ENCODE measurements at regions of chr6 and their contacts with region 1.

Region 1: GRCh38 chr6:107731422-107732319 is 92.4 kb downstream of the SCML4 start:
- DNase-seq: peak; percentile 43 to 61 (median 46)
- H3K4me3 ChIP-seq: peak overlapping the region; percentile 71 to 88
- H3K4me3 Mint-ChIP-seq: peak overlapping the region; percentile 91 to 99 (median 96)
- H3K27ac ChIP-seq: peak overlapping the region; percentile 84
- H3K27ac Mint-ChIP-seq: peak overlapping the region; percentile 79 to 97 (median 92)
- H3K4me1 ChIP-seq: peaks cover 90% of the 10 kb centered on the region
- H3K4me1 Mint-ChIP-seq: peaks cover 53 to 96% (median 73%) of the 10 kb centered on the region in 4 donors
- H3K27me3 ChIP-seq: no peaks in the 10 kb centered on the region
- H3K27me3 Mint-ChIP-seq: no peaks in the 10 kb centered on the region

Region 2: DNA sequence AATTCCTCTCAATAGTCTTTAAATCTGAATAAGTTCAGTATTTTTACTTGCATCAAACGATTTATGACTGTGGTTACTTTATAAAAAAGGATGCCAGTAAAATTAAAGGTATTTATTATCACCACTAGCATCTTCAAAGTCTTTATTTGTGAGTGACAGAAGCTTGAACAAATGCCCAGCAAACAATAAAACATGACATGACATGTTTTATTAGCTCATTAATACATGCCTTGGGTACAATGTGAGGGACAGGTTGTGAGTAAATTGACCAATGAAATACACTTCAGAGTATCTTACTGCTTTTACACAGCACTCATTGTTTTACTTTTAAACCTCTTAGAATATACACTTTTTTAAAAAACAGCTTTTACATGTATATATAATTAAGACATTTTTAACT is 502.9 kb before region 1 on chr6:
- CTCF ChIA-PET with region 1: no interaction called
- POLR2A ChIA-PET with region 1: no interaction called
- intact Hi-C with region 1: no loop called
- DNase-seq: no peak
- H3K4me3 ChIP-seq: no peak overlapping the region
- H3K4me3 Mint-ChIP-seq: no peak overlapping the region
- H3K27ac ChIP-seq: no peak overlapping the region
- H3K27ac Mint-ChIP-seq: no peak overlapping the region
- H3K4me1 ChIP-seq: no peaks in the 10 kb centered on the region
- H3K4me1 Mint-ChIP-seq: peaks cover 0 to 3% (median 1%) of the 10 kb centered on the region in 4 donors
- H3K27me3 ChIP-seq: no peaks in the 10 kb centered on the region
- H3K27me3 Mint-ChIP-seq: no peaks in the 10 kb centered on the region

Region 3: GRCh38 chr6:107275330-107275865 is 456.3 kb before region 1 on chr6:
- CTCF ChIA-PET with region 1: no interaction called
- POLR2A ChIA-PET with region 1: no interaction called
- intact Hi-C with region 1: no loop called
- DNase-seq: no peak
- H3K4me3 ChIP-seq: no peak overlapping the region
- H3K4me3 Mint-ChIP-seq: no peak overlapping the region
- H3K27ac ChIP-seq: no peak overlapping the region
- H3K27ac Mint-ChIP-seq: no peak overlapping the region
- H3K4me1 ChIP-seq: no peaks in the 10 kb centered on the region
- H3K4me1 Mint-ChIP-seq: peaks cover 0 to 3% (median 1%) of the 10 kb centered on the region in 4 donors
- H3K27me3 ChIP-seq: no peaks in the 10 kb centered on the region
- H3K27me3 Mint-ChIP-seq: no peaks in the 10 kb centered on the region

Region 4: DNA sequence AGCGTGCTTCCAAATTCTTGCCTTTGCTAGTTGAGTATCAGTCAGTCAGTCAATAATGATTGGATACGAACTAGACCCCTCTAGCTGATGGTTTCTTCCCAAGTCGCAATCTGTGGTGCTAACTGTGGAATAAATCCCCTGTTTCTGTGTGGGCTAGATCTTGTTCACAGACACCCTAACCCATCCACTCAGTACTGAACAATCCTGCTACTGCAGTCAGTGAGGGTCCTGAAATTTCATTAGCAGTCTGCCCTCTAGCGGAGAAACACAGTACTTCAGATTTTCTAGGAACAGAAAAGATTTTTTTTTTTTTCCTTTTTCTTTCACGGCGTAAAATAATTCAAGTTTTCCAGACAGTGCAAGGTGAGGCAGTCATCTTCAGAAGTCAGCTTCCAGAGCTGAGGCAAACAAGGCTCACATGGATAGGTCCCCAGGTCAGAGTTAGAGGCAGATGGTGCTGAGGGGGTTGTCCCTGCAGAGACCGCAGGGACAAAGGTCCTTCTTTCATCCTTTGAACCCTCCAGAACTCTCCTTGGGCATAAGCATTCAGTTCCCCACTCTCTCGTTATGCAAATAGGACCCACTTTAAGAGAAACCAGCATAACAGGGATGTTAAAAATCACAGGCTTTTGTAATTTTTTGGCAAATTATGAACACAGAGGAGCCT is 27.2 kb before region 1 on chr6:
- CTCF ChIA-PET with region 1: interaction called, 15 read pairs
- POLR2A ChIA-PET with region 1: interaction called, 18 read pairs
- intact Hi-C with region 1: no loop called
- DNase-seq: peak in 4 of 5 donors; percentile 26 to 37 (median 30)
- H3K4me3 ChIP-seq: no peak overlapping the region
- H3K4me3 Mint-ChIP-seq: no peak overlapping the region
- H3K27ac ChIP-seq: no peak overlapping the region
- H3K27ac Mint-ChIP-seq: peak overlapping the region; percentile 17 to 87 (median 53)
- H3K4me1 ChIP-seq: peaks cover 14% of the 10 kb centered on the region
- H3K4me1 Mint-ChIP-seq: peaks cover 18 to 44% (median 26%) of the 10 kb centered on the region in 4 donors
- H3K27me3 ChIP-seq: no peaks in the 10 kb centered on the region
- H3K27me3 Mint-ChIP-seq: no peaks in the 10 kb centered on the region

Region 5: GRCh38 chr6:107753778-107754177 is 22.1 kb after region 1 on chr6:
- CTCF ChIA-PET with region 1: interaction called, 11 read pairs
- POLR2A ChIA-PET with region 1: interaction called, 17 read pairs
- intact Hi-C with region 1: no loop called
- DNase-seq: no peak
- H3K4me3 ChIP-seq: no peak overlapping the region
- H3K4me3 Mint-ChIP-seq: peak overlapping the region in 7 of 8 donors; percentile 57 to 77 (median 64)
- H3K27ac ChIP-seq: no peak overlapping the region
- H3K27ac Mint-ChIP-seq: peak overlapping the region in 6 of 7 donors; percentile 47 to 90 (median 78)
- H3K4me1 ChIP-seq: peaks cover 64% of the 10 kb centered on the region
- H3K4me1 Mint-ChIP-seq: peaks cover 56 to 91% (median 77%) of the 10 kb centered on the region in 4 donors
- H3K27me3 ChIP-seq: no peaks in the 10 kb centered on the region
- H3K27me3 Mint-ChIP-seq: no peaks in the 10 kb centered on the region

Region 6: DNA sequence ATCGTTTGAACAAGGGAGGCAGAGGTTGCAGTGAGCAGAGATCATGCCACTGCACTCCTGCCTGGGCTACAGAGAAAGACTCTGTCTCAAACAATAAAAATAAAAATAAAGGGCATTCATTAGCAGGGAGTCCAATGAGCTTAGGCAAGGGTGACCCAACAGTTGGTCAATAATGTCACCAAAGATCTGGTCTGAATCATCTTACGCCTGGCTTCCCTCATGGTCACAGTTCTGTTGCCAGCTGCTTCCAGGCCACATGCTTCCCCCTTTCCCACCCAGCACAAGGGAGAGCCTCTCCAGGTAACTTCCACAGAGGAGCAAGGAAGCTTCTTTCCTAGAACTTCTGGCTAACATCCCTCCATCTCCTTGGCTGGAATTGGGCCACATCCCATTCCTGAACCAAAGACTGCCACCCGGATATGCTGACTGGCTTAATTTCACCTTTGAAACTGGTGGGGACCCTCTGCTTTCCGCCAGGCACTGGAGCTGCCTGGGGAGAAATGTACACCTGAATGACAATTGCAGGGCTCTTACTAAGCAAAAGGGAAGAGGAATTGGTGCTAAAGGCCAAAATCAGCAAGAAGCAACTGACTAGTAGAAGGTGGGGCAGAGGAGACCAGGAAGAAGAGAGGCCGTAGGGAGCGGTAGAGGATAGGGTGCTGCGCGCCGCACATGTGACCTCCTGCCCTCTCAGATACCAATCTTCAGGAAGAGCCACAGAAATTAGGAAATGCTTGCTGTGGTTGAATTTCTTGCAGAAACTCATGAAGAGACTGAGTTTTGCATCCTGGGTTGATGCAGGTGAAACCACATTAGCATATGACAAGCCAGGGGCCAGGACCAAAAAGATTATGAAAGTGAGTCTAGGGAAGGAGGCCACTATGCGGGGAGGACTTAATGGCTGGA is 100.7 kb after region 1 on chr6:
- CTCF ChIA-PET with region 1: interaction called, 7 read pairs
- POLR2A ChIA-PET with region 1: interaction called, 12 read pairs
- intact Hi-C with region 1: no loop called
- DNase-seq: no peak
- H3K4me3 ChIP-seq: no peak overlapping the region
- H3K4me3 Mint-ChIP-seq: peak overlapping the region; percentile 11 to 73 (median 54)
- H3K27ac ChIP-seq: no peak overlapping the region
- H3K27ac Mint-ChIP-seq: peak overlapping the region; percentile 1 to 82 (median 63)
- H3K4me1 ChIP-seq: peaks cover 22% of the 10 kb centered on the region
- H3K4me1 Mint-ChIP-seq: peaks cover 11 to 42% (median 31%) of the 10 kb centered on the region in 4 donors
- H3K27me3 ChIP-seq: no peaks in the 10 kb centered on the region
- H3K27me3 Mint-ChIP-seq: no peaks in the 10 kb centered on the region

Measured in CD4-positive, alpha-beta memory T cell (primary cell).